Adrenal gland (tissue), 19 donors: ENCODE measurements at regions of chr10 and their contacts with region 1.

Region 1: GRCh38 chr10:103598654-103599115 is 105.2 kb downstream of the NEURL1 start:
- DNase-seq: peak; percentile 40 to 81 (median 66)
- H3K4me3 ChIP-seq: no peak overlapping the region
- H3K27ac ChIP-seq: no peak overlapping the region
- H3K4me1 ChIP-seq: no peaks in the 10 kb centered on the region
- H3K27me3 ChIP-seq: no peaks in the 10 kb centered on the region
- CTCF ChIP-seq: peak; percentile 30 to 75 (median 66)
- POLR2A ChIP-seq: no peak

Region 2: GRCh38 chr10:103685880-103686669 is 87.4 kb after region 1 on chr10:
- intact Hi-C with region 1: loop called (anchors 2 to 5 kb)
- DNase-seq: peak; percentile 69 to 92 (median 78)
- H3K4me3 ChIP-seq: no peak overlapping the region
- H3K27ac ChIP-seq: peak overlapping the region in 2 of 5 donors; percentile 26 to 68
- H3K4me1 ChIP-seq: no peaks in the 10 kb centered on the region
- H3K27me3 ChIP-seq: no peaks in the 10 kb centered on the region
- CTCF ChIP-seq: peak; percentile 90 to 99 (median 94)
- POLR2A ChIP-seq: no peak